G401 (cell line): ENCODE measurements at regions of chr20 and their contacts with region 1.

Region 1: GRCh38 chr20:63782051-63782471 is 42.5 kb downstream of the SLC2A4RG start:
- DNase-seq: peak; percentile 56

Region 2: DNA sequence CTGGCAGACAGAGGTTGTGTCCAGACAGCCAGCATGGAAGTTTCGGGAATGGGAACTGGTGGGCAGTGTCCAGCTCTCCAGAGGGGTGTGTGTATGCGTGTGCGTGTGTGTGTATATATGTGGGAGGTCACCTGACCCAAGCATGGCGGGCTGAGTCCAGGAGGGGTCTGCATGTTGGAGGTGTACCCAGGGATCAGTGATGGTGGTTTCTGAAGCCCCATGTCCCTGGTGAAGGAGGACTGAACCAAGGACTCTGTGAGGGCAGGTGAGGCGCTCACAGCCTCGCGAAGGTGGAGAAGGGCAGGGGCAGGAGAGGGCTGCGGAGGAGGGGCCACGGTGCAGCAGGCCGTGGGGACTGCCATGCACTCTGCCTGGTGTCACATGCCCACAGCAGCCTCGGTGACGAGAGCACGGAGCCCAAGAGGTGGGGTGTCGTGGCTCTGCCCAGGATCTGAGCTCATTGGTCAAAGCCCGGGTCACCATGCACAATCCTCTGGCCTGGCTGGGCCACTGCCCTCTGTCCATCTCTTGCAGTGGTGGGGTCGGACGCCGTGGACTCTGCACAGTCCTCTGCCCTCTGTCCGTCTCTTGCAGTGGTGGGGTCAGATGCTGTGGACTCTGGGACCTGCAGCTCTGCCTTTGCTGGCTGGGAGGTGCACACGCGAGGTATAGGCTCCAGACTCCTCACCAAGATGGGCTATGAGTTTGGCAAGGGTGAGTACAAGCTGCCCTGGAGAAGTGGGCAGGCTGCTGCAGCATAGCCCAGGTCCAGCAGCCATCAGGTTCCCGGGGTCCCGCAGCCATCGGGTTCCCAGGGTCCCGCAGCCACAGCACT is 47.7 kb before region 1 on chr20:
- in situ Hi-C with region 1: loop called (anchors 10 kb)
- DNase-seq: no peak

Region 3: DNA sequence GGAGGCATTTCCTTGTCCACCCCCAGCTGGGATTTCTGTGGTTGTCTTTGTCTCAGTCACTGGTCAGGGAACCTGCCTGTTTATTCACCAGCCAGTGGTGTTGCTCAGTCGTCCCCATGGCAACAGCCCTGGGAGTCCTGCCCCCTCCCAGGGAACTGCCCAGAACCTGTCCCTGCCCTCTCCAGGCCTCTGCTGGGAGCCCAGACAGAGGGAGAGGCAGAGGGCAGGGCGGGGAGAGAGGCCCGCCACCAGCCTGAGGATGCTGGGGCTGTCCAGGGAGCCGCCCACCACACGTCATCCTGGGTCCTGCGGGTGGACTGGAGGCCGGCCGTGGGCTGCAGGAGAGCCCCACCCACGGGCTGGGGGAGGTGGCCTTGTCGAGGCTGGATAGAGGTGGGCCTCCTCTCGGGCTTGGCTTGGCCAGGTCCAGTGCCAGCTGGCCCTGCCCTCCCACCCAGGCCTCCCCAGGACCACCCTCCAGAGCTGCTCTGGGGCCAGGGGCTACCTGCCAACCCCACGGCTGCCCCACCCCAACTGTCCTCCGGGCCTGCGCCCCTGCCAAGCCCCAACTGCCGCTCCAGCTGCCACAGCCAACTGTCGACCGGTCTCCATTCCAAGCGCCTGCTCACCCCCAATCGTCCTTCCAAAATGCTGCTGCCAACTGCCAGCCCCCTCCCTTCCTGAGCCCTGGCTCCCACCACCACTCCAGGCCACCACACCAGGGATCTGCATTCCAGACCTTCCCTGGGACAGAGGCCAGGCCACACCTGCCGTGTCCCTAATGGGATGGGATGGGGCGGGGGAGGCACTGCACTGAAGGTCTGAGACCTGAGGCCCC is 53.2 kb after region 1 on chr20:
- in situ Hi-C with region 1: no loop called
- DNase-seq: peak; percentile 99

Region 4: GRCh38 chr20:63863798-63864549 is 81.9 kb after region 1 on chr20:
- in situ Hi-C with region 1: no loop called
- DNase-seq: peak; percentile 84